ENCODE measurements at regions of chr5 and their contacts with region 1.

Region 1: DNA sequence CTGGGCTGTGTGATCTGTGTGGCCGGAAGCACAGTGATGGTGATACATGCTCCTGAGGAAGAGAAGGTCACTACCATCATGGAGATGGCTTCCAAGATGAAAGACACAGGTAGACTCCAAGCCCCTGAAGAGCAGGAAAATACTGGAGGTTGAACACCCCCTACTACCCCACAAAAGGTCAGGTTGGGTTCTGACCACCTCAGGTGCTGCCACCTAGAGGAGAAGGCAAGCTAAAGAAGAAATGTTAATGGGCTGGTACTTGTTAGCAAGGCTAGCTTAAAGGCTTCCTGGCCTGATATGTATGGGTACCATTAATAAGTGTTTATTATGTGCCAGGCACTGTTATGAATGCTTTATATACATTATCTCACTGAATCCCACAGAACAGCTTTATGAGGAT is 11.7 kb downstream of the NIPAL4 start:
- DNase-seq: peak; percentile 50
- ATAC-seq: peak; percentile 90
- H3K4me3 Mint-ChIP-seq: no peak overlapping the region
- H3K27ac Mint-ChIP-seq: no peak overlapping the region
- H3K4me1 Mint-ChIP-seq: no peaks in the 10 kb centered on the region
- H3K27me3 Mint-ChIP-seq: no peaks in the 10 kb centered on the region
- CTCF ChIP-seq: no peak; the same call in 1 of the 2 replicates

Region 2: DNA sequence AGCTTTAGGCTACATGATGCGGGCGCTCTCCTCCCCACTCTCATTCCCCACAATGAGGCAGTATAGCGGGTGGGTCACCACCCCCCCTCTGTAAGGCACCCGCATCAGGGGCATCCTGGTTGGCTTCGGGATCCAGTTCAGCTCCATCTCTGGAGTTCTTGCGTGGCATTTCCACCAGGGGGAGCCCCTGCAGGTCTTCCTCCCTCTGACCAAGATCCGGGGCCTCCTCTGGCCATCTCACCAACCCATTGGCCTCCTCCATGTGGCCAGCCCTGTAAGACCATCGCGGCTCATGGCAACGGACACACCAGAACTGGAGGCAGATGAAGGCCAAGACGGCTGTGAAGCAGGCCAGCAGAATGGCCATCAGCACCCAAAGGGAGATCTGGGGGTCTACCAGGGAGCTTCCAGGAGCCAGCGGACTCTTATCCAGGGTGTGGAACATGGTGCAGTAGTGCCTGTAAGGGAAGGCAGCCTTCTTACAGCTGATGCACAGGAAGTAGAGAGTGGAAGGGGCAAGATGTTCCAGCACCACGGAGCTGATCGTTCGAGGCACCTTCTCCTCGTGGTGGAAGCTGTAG is 128.8 kb before region 1 on chr5:
- CTCF ChIA-PET with region 1: interaction called, 26 read pairs
- POLR2A ChIA-PET with region 1: no interaction called
- DNase-seq: peak; percentile 66
- ATAC-seq: peak; percentile 93
- H3K4me3 Mint-ChIP-seq: no peak overlapping the region
- H3K27ac Mint-ChIP-seq: no peak overlapping the region
- H3K4me1 Mint-ChIP-seq: no peaks in the 10 kb centered on the region
- H3K27me3 Mint-ChIP-seq: no peaks in the 10 kb centered on the region
- CTCF ChIP-seq: peak; percentile 55; the same call in 1 of the 2 replicates

Region 3: DNA sequence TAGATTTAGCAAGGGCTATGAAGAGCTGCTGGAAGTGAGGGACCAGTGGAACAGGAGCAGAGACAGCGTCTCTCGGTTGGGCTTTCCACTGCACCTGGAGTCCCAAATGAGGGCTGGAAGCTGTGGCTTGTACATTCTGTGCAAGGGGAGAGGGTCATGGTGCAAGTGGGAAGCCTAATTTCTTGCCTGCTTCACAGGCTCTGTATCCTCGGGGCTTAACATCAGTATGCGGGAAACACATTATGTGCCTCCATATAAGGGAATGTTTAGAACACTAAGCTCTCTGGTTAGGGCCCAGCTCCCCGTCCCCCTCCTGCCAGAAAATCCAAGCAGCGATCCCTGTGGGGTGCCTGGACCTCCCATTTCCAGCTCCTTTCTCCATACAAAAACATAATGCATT is 100.7 kb before region 1 on chr5:
- CTCF ChIA-PET with region 1: interaction called, 11 read pairs
- POLR2A ChIA-PET with region 1: interaction called, 3 read pairs
- DNase-seq: peak; percentile 41
- ATAC-seq: peak; percentile 91
- H3K4me3 Mint-ChIP-seq: no peak overlapping the region
- H3K27ac Mint-ChIP-seq: no peak overlapping the region
- H3K4me1 Mint-ChIP-seq: peaks cover 16% of the 10 kb centered on the region
- H3K27me3 Mint-ChIP-seq: no peaks in the 10 kb centered on the region; the same call in 1 of the 2 replicates
- CTCF ChIP-seq: no peak

Region 4: GRCh38 chr5:157443041-157443549 is 28.6 kb before region 1 on chr5:
- CTCF ChIA-PET with region 1: interaction called, 18 read pairs
- POLR2A ChIA-PET with region 1: interaction called, 4 read pairs
- DNase-seq: no peak
- ATAC-seq: no peak
- H3K4me3 Mint-ChIP-seq: no peak overlapping the region
- H3K27ac Mint-ChIP-seq: no peak overlapping the region
- H3K4me1 Mint-ChIP-seq: peaks cover 7% of the 10 kb centered on the region; the same call in 1 of the 2 replicates
- H3K27me3 Mint-ChIP-seq: no peaks in the 10 kb centered on the region
- CTCF ChIP-seq: no peak

Region 5: GRCh38 chr5:157820593-157821252 is 349.0 kb after region 1 on chr5:
- CTCF ChIA-PET with region 1: no interaction called
- POLR2A ChIA-PET with region 1: no interaction called
- DNase-seq: no peak
- ATAC-seq: no peak; the same call in 1 of the 2 replicates
- H3K4me3 Mint-ChIP-seq: no peak overlapping the region
- H3K27ac Mint-ChIP-seq: peak overlapping the region; percentile 61; the same call in 1 of the 2 replicates
- H3K4me1 Mint-ChIP-seq: peaks cover 42% of the 10 kb centered on the region
- H3K27me3 Mint-ChIP-seq: no peaks in the 10 kb centered on the region
- CTCF ChIP-seq: peak; percentile 27; the same call in 1 of the 2 replicates

Measured in WTC11 (cell line).